K562 (cell line): ENCODE measurements at regions of chr7 and their contacts with region 1.

Region 1: DNA sequence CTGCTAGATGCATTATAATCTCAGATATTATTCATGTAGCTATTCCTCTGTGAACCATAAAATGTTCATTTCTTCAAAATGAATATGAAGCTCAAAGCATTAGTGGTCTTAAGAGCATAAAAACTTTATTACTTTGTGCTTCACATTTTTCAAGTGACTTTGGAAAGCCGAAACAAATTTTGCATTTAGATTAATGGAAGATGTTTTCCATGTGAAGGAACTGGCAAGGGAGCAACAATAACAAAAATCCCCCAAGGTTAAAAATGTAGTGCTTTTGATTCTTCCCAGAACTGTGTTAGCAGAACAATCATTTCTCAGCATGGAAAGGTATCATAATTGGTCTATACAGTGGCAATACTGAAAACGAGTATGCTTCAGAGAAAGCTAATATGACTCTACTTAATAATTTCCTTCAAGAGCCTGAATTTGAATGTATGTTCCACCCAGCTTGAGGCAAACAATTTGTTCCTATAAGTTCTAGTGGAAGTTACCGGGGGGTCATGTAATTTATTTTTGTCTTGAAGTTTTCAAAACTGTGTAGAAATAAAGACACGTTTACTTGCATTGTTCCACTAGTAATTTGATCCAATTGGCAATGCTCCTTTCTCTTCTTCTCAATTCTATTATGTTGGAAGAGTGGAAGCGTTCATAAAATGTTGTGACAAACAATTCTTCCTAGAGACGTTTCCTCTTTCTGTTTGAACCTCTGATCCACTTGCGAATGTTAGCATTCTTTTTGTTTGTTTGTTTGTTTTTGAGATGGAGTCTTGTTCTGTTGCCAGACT is 665.4 kb downstream of the AUTS2 start:
- DNase-seq: no peak
- ATAC-seq: no peak
- H3K4me3 ChIP-seq: no peak overlapping the region
- H3K27ac ChIP-seq: no peak overlapping the region
- H3K4me1 ChIP-seq: no peaks in the 10 kb centered on the region
- H3K27me3 ChIP-seq: no peaks in the 10 kb centered on the region
- CTCF ChIP-seq: no peak
- EP300 ChIP-seq: no peak
- POLR2A ChIP-seq: no peak
- RAD21 ChIP-seq: no peak

Region 2: GRCh38 chr7:70935854-70936253 is 672.2 kb after region 1 on chr7:
- CTCF ChIA-PET with region 1: no interaction called
- POLR2A ChIA-PET with region 1: no interaction called
- in situ Hi-C with region 1: no loop called
- intact Hi-C with region 1: no loop called
- DNase-seq: no peak
- ATAC-seq: no peak
- H3K4me3 ChIP-seq: no peak overlapping the region
- H3K27ac ChIP-seq: no peak overlapping the region
- H3K4me1 ChIP-seq: no peaks in the 10 kb centered on the region
- H3K27me3 ChIP-seq: peaks cover 2 to 11% of the 10 kb centered on the region in 2 experiments; a peak in 4 of 5 replicates
- CTCF ChIP-seq: no peak
- EP300 ChIP-seq: no peak
- POLR2A ChIP-seq: no peak
- RAD21 ChIP-seq: no peak

Region 3: DNA sequence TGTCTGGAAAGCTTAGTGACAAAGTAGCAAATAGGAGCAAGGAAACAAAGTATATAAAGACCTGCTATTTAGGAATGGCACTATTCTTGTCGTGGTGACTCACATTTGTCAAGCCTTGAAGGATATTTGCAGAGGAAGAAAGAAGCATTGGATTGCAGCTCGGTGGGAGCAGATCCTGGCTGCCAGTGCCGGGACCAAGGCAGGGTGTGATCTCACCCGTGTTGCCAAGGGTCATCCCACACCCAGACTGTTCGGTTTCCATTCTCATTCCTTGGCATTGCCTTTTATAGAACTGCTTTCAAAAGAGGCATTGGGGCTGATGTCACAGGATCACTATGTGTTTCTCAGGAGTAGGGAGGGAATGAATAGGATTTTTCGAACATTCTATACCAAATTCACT is 1044.4 kb after region 1 on chr7:
- CTCF ChIA-PET with region 1: no interaction called
- POLR2A ChIA-PET with region 1: no interaction called
- in situ Hi-C with region 1: no loop called
- intact Hi-C with region 1: loop called (anchors 5 kb)
- DNase-seq: no peak
- ATAC-seq: no peak
- H3K4me3 ChIP-seq: no peak overlapping the region
- H3K27ac ChIP-seq: no peak overlapping the region
- H3K4me1 ChIP-seq: no peaks in the 10 kb centered on the region
- H3K27me3 ChIP-seq: no peaks in the 10 kb centered on the region
- CTCF ChIP-seq: no peak
- EP300 ChIP-seq: no peak
- POLR2A ChIP-seq: no peak
- RAD21 ChIP-seq: no peak